Activated naive CD8-positive, alpha-beta T cell treated with anti-CD3 and anti-CD28 coated beads, Interleukin-2, amount 10 ng/mL, durations not matched to agents 7 days and 5 days (primary cell): ENCODE measurements at regions of chr3 and their contacts with region 1.

Region 1: DNA sequence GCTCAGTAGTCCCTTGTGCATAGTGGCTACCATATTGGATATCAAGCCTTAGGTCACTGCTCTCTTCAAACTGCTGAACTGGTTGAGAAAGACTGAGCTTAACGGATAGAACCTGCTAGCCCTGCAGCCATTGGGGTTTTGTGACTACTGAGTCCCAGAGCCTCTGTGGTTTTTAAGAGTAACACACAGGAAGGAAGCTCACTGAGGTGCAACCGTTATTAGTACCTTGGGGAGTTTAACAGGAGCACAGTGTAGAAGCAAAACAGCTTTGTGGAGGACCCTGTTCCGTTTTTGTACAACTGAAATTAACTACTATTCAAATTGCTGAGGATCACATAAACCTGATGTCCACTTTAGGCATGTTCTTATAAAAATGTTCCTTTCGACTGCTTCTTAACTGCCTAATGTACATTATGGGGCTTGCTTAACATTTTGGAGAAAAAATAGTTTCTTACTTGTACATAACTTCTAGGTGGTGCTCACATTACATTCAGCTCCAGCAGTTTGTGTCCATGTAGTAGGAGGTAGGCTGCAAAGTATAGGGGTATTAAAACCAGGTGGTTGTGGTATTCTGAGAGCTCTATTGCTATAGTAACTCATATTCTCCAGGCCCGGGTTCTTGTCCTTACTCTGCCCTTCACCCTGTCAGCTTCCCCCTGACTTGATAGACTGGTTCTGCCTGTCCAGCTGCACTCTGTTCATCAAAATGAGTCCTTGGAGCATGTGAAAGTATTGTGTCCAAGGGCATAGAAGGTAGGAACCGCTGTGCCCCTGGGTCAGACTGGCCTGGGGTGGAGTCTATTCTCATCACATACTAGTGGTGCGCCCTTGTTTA is 17.3 kb downstream of the PXK start:
- DNase-seq: no peak
- ATAC-seq: peak; percentile 58
- H3K4me3 Mint-ChIP-seq: peak overlapping the region; percentile 64
- H3K27ac Mint-ChIP-seq: peak overlapping the region; percentile 87
- H3K4me1 Mint-ChIP-seq: peaks cover 72% of the 10 kb centered on the region
- H3K27me3 Mint-ChIP-seq: no peaks in the 10 kb centered on the region

Region 2: DNA sequence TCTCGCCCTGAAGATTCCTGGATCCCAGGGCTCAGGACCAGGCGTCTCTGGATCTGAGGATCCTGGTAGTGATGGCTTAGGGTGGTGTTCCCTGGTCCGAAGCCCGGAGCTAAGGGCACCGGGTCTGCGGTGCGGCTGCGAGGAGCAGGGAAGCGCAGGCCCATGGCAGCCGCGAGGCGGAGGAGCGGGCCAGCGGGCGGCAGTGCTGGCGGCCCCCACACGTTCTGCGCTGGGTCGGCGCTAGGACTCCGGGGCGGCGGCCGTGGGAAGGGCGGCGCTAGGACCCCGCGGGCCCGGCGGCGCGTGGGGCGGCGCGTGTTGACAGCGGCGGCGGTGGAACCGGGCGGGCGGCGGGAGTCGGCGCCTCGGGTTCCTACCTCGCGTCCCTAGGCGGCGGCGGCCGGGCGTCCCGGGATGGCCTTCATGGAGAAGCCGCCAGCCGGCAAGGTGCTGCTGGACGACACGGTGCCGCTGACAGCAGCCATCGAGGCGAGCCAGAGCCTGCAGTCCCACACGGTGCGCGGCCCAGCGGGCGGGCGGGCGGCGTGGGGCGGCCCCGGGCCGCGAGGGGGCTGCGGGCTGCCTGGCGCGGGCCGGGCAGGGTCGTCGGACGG is 17.3 kb before region 1 on chr3 and contains the start of gene PXK:
- POLR2A ChIA-PET with region 1: interaction called, 38 read pairs
- DNase-seq: peak; percentile 90
- ATAC-seq: peak; percentile 88
- H3K4me3 Mint-ChIP-seq: peak within 1 kb of the TSS; percentile 100
- H3K27ac Mint-ChIP-seq: peak within 1 kb of the TSS; percentile 97
- H3K4me1 Mint-ChIP-seq: peaks cover 32% of the 10 kb centered on the region
- H3K27me3 Mint-ChIP-seq: no peaks in the 10 kb centered on the region
- total RNA-seq, gene PXK: 38.6 to 41.5 TPM